Activated CD8-positive, alpha-beta memory T cell treated with anti-CD3 and anti-CD28 coated beads, Interleukin-2, amount 10 ng/mL, durations not matched to agents 7 days and 5 days (primary cell): ENCODE measurements at regions of chr19 and their contacts with region 1.

Region 1: GRCh38 chr19:10695401-10696398 is 5.5 kb upstream of the QTRT1 start:
- DNase-seq: peak; percentile 94
- ATAC-seq: peak; percentile 99
- H3K4me3 Mint-ChIP-seq: peak overlapping the region; percentile 67
- H3K27ac Mint-ChIP-seq: no peak overlapping the region
- H3K4me1 Mint-ChIP-seq: peaks cover 14% of the 10 kb centered on the region
- H3K27me3 Mint-ChIP-seq: peaks cover 12% of the 10 kb centered on the region

Region 2: DNA sequence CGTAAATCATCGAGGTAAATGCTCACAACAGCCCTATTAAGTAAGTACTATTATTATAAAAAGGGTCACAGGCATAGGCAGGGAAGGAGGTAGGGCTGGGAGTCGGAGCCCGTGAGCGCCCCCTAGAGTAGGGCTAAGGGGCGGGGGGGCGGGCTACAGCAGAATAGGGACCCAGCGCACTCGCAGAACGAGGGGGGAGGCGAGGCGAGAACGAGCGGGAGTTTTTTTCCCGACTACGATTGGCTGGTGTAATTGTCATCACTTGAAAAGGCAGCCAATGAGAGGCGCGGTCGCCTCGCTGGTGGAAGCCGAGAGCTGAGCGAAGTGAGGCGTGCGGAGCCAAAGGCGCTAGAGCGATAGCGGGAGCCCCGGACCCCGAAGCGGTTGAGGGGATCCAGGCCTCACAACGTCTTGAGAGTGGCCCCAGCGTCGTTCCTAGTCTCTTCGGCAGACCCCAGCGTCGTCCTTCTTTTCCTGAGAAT is 216.8 kb before region 1 on chr19:
- CTCF ChIA-PET with region 1: interaction called, 12 read pairs
- DNase-seq: peak; percentile 94
- ATAC-seq: peak; percentile 97
- H3K4me3 Mint-ChIP-seq: peak overlapping the region; percentile 28
- H3K27ac Mint-ChIP-seq: no peak overlapping the region
- H3K4me1 Mint-ChIP-seq: peaks cover 12% of the 10 kb centered on the region
- H3K27me3 Mint-ChIP-seq: no peaks in the 10 kb centered on the region

Region 3: DNA sequence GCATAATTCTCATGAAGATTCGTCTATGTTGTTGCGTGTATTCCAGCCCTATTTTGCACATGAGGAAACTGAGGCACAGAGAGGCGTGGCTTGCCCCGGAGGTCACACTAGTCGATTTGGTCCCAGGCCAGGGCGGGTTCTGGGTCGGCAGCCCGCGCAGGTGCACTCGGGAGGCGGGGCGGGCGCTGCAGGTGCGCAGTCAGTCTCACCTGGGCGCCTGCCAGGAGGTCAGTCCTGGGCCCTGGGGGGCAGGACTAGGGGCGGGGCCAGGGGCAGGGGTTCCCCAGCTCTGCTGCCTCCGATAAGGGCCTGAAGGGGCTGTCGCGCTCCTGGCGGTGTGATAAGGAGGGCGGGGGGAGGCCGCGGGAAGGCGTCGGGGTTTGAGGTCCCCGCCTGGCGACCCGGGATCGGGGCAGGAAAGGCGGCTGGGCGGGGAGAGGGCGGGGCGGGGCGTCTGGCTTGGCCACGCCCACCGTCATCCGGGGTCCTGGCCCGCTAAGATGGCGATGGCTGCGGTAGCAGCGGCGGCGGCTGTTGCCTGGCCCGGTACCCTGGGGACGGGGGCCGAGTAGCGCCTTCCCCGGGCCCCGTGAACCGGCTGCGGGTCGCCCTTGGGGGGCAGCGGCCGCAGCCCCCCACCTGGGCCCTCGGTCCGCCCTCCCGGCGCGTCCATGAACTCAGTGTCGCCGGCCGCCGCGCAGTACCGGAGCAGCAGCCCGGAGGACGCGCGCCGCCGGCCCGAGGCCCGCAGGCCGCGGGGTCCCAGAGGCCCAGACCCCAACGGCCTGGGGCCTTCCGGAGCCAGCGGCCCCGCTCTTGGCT is 152.1 kb before region 1 on chr19 and contains the start of gene ATG4D:
- CTCF ChIA-PET with region 1: interaction called, 10 read pairs
- DNase-seq: peak; percentile 84
- ATAC-seq: peak; percentile 88
- H3K4me3 Mint-ChIP-seq: peak within 1 kb of the TSS; percentile 93
- H3K27ac Mint-ChIP-seq: peak within 1 kb of the TSS; percentile 93
- H3K4me1 Mint-ChIP-seq: peaks cover 16% of the 10 kb centered on the region
- H3K27me3 Mint-ChIP-seq: peaks cover 16% of the 10 kb centered on the region
- total RNA-seq, gene ATG4D: 48.3 to 57.8 TPM

Region 4: GRCh38 chr19:10574462-10574861 is 121.2 kb before region 1 on chr19:
- CTCF ChIA-PET with region 1: interaction called, 123 read pairs
- DNase-seq: no peak
- ATAC-seq: no peak
- H3K4me3 Mint-ChIP-seq: no peak overlapping the region
- H3K27ac Mint-ChIP-seq: no peak overlapping the region
- H3K4me1 Mint-ChIP-seq: peaks cover 27% of the 10 kb centered on the region
- H3K27me3 Mint-ChIP-seq: no peaks in the 10 kb centered on the region

Region 5: DNA sequence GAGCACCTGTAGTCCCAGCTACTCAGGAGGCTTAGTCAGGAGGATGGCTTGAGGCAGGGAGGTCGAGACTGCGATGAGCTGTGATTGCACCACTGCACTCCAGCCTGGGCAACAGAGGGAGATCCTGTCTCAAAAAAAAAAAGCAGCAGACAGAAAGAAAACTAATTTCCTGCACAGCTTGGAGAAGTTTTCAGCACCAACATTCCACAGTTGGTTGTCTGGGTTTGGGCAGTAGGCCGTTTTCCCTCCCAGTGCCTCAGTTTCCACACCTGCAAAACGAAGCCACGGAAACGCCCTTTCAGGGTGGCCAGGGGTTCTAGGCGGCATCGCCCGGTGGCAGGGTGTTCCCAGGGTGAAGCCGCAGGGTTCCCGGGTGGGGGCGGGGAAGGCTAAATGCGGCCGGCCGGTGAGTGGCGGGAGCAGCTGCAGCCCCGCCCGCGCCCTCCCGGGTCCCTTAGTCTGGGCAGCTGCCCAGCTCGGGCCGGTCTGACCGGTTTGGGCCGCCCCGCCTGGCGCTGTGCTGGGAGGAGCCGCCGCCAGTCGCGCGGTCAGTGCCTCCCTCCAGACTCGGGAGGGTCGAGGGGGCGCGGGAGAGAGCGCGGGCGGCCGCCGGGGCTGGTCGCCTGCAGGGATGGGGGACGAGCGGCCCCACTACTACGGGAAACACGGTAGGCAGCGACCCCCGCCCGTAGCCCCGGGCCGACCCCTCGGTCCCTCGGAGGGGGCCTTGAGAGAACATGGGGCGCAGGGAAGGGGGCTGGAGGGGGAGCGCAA is 70.5 kb before region 1 on chr19 and contains the start of gene SLC44A2:
- CTCF ChIA-PET with region 1: no interaction called
- DNase-seq: no peak
- ATAC-seq: no peak
- H3K4me3 Mint-ChIP-seq: no peak within 1 kb of the TSS
- H3K27ac Mint-ChIP-seq: peak within 1 kb of the TSS; percentile 85
- H3K4me1 Mint-ChIP-seq: peaks cover 20% of the 10 kb centered on the region
- H3K27me3 Mint-ChIP-seq: no peaks in the 10 kb centered on the region
- total RNA-seq, gene SLC44A2: 83.4 to 86.8 TPM

Region 6: DNA sequence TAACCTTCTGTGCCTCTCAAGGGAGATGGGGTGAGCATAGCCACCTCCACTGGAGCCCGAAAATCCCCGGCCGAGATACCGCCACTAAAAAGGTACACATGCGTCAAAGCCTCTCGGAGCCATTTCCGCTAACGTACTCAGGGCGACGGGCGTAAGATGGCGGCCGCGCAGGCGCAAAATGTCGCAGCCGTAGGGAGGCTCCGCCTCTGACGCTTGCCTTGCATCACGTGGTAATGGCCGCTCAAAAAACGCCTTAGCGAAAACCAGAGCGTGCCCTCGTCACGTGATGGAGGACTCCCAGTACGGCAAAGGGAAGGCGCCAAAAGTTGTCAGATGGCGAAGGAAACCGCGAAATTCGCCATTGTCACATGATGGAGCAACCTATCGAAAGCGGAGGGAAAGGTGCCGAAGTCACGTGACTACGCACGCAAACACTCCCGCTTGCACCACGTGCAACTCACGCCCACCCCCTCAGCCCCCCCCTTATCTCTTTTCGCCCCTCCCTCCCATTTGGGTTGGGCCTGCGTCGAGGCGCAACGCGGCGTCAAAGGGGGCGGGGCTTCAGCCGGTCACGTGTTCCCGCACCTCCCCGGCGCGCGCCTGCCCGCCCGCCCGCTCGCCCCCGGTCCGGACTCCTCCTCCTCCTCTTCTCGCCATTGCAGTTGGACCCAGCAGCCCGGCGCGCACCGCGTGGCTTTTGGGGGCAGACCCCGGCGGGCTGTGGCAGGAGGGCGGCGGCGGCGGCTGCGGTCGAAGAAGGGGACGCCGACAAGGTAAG is 41.8 kb before region 1 on chr19 and contains the start of gene ILF3:
- CTCF ChIA-PET with region 1: interaction called, 147 read pairs
- DNase-seq: peak; percentile 100
- ATAC-seq: peak; percentile 80
- H3K4me3 Mint-ChIP-seq: peak within 1 kb of the TSS; percentile 84
- H3K27ac Mint-ChIP-seq: peak within 1 kb of the TSS; percentile 97
- H3K4me1 Mint-ChIP-seq: peaks cover 35% of the 10 kb centered on the region
- H3K27me3 Mint-ChIP-seq: no peaks in the 10 kb centered on the region
- total RNA-seq, gene ILF3: 418 to 431 TPM

Region 7: DNA sequence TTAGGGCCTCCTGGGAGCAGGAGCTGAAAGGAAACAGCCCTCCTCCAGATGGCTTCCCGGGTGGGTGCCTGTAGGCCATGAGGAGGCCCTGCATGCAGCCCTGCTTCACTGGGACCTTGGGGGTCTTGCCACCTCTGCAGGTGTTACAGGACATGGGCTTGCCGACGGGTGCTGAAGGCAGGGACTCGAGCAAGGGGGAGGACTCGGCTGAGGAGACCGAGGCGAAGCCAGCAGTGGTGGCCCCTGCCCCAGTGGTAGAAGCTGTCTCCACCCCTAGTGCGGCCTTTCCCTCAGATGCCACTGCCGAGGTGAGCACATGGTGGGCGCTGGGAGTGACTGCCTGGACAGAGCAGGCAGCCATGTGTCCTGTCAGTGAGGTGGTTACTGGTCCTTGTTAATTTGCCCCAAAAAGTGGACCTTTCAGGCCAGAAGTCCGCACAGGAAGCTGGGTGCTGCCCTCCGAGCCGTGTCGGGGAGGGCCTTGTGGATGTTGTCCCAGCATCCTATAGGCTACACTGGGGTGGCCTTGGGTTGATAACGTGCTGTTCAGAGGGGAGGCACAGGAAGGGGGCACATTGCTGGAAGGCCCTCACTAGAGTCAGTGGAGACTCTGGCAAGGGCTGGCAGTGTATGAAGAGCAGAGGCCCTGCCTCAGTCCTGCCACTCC is 13.2 kb before region 1 on chr19:
- CTCF ChIA-PET with region 1: interaction called, 10 read pairs
- DNase-seq: no peak
- ATAC-seq: no peak
- H3K4me3 Mint-ChIP-seq: no peak overlapping the region
- H3K27ac Mint-ChIP-seq: no peak overlapping the region
- H3K4me1 Mint-ChIP-seq: no peaks in the 10 kb centered on the region
- H3K27me3 Mint-ChIP-seq: no peaks in the 10 kb centered on the region

Region 8: GRCh38 chr19:10864538-10864899 is 168.8 kb after region 1 on chr19:
- CTCF ChIA-PET with region 1: interaction called, 46 read pairs
- DNase-seq: peak; percentile 89
- ATAC-seq: peak; percentile 93
- H3K4me3 Mint-ChIP-seq: peak overlapping the region; percentile 19
- H3K27ac Mint-ChIP-seq: peak overlapping the region; percentile 57
- H3K4me1 Mint-ChIP-seq: peaks cover 27% of the 10 kb centered on the region
- H3K27me3 Mint-ChIP-seq: no peaks in the 10 kb centered on the region